ENCODE measurements at regions of chr22 and their contacts with region 1.

Region 1: GRCh38 chr22:39496131-39496838 is 5.8 kb upstream of the MIEF1 start:
- DNase-seq: peak; percentile 62
- ATAC-seq: peak; percentile 75
- H3K4me3 ChIP-seq: no peak overlapping the region
- H3K4me3 Mint-ChIP-seq: no peak overlapping the region
- H3K27ac ChIP-seq: no peak overlapping the region
- H3K27ac Mint-ChIP-seq: peak overlapping the region; percentile 70
- H3K4me1 ChIP-seq: peaks cover 4 to 7% of the 10 kb centered on the region in 2 donors
- H3K4me1 Mint-ChIP-seq: peaks cover 16% of the 10 kb centered on the region
- H3K27me3 ChIP-seq: no peaks in the 10 kb centered on the region
- H3K27me3 Mint-ChIP-seq: no peaks in the 10 kb centered on the region
- CTCF ChIP-seq: peak; percentile 73

Region 2: DNA sequence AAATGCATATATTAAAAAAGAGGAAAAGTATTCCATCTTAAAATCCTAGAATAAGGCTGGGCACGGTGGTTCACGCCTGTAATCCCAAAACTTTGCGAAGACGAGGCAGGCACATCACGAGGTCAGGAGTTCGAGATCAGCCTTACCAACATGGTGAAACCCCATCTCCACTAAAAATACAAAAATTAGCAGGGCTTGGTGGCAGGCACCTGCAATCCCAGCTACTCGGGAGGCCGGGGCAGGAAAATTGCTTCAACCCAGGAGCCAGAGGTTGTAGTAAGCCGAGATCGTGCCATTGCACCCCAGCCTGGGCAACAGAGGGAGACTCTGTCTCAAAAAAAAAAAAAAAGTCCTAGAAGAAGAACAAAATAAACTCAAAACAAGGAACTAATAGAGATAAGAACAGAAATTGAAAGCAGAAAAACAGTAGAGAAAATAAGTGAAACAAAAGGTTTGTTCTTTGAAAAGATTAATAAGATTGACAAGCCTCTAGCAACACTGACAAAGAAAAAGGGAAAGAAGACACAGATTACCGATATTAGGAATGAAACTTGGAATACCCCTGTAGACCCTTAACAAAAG is 298.8 kb before region 1 on chr22:
- CTCF ChIA-PET with region 1: no interaction called
- POLR2A ChIA-PET with region 1: no interaction called
- intact Hi-C with region 1: no loop called
- DNase-seq: no peak
- ATAC-seq: no peak
- H3K4me3 ChIP-seq: no peak overlapping the region
- H3K4me3 Mint-ChIP-seq: peak overlapping the region; percentile 31
- H3K27ac ChIP-seq: no peak overlapping the region
- H3K27ac Mint-ChIP-seq: peak overlapping the region; percentile 64
- H3K4me1 ChIP-seq: peaks cover 0 to 7% of the 10 kb centered on the region in 2 donors
- H3K4me1 Mint-ChIP-seq: peaks cover 6% of the 10 kb centered on the region
- H3K27me3 ChIP-seq: no peaks in the 10 kb centered on the region
- H3K27me3 Mint-ChIP-seq: peaks cover 7% of the 10 kb centered on the region
- CTCF ChIP-seq: no peak

Region 3: GRCh38 chr22:39462443-39463221 is 33.7 kb before region 1 on chr22:
- CTCF ChIA-PET with region 1: interaction called, 10 read pairs
- POLR2A ChIA-PET with region 1: no interaction called
- intact Hi-C with region 1: no loop called
- DNase-seq: peak; percentile 67
- ATAC-seq: peak; percentile 19
- H3K4me3 ChIP-seq: no peak overlapping the region
- H3K4me3 Mint-ChIP-seq: peak overlapping the region; percentile 50
- H3K27ac ChIP-seq: peak overlapping the region; percentile 75 to 83
- H3K27ac Mint-ChIP-seq: peak overlapping the region; percentile 62
- H3K4me1 ChIP-seq: peaks cover 60 to 75% of the 10 kb centered on the region in 2 donors
- H3K4me1 Mint-ChIP-seq: peaks cover 77% of the 10 kb centered on the region
- H3K27me3 ChIP-seq: peaks cover 0 to 10% (median 4%) of the 10 kb centered on the region in 4 experiments
- H3K27me3 Mint-ChIP-seq: peaks cover 6% of the 10 kb centered on the region
- CTCF ChIP-seq: no peak

Region 4: DNA sequence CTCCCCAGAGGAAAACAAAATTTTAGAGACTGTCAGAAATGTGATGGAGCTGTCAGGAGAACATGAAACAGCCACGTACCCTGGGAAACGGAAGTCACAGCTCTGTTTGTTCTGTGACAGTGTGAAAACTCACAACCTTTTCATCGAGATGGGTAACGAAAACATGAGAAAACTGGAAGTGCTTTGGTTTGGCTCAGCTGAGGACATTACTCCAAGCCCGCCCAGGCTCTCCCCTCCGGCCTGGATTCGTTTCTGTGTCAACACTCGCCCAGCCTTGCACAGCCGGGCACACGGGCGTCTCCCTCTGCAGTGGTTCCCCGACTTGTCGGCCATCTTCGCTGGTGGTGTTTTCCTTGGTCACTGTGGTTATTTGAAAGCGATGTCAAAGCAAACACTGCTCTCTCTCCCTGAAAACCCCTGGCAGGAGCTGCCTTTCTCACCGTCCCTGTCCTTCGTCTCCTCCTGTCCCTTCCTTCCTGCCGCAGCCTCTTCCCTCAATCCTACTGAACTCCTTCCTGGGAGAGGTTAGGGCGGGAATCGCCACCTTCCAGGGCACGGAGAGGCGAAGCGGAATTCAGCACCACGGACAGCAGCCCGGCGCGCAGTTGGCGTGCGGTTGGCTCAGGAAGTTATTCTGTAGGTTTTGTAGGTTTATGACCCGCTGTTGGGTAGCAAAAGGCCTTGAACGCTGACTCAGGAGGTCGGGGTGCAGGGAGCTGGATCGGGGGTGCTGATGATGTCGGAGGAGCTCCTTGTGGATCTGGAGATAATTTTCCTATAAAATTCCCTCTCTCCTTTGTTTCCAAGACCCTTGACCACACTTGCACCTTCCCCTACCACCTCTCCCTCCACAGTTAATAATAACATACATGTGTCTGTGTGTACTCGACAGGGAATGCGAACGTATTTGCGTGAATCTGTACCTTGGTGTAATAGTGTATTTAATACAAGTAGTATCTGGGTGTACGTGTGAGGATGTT is 49.4 kb after region 1 on chr22:
- CTCF ChIA-PET with region 1: no interaction called
- POLR2A ChIA-PET with region 1: no interaction called
- intact Hi-C with region 1: no loop called
- DNase-seq: peak; percentile 70
- ATAC-seq: peak; percentile 36
- H3K4me3 ChIP-seq: no peak overlapping the region
- H3K4me3 Mint-ChIP-seq: no peak overlapping the region
- H3K27ac ChIP-seq: no peak overlapping the region
- H3K27ac Mint-ChIP-seq: peak overlapping the region; percentile 61
- H3K4me1 ChIP-seq: peaks cover 0 to 8% of the 10 kb centered on the region in 2 donors
- H3K4me1 Mint-ChIP-seq: peaks cover 4% of the 10 kb centered on the region
- H3K27me3 ChIP-seq: peaks cover 0 to 47% (median 20%) of the 10 kb centered on the region in 4 experiments
- H3K27me3 Mint-ChIP-seq: peaks cover 54% of the 10 kb centered on the region
- CTCF ChIP-seq: no peak

Region 5: DNA sequence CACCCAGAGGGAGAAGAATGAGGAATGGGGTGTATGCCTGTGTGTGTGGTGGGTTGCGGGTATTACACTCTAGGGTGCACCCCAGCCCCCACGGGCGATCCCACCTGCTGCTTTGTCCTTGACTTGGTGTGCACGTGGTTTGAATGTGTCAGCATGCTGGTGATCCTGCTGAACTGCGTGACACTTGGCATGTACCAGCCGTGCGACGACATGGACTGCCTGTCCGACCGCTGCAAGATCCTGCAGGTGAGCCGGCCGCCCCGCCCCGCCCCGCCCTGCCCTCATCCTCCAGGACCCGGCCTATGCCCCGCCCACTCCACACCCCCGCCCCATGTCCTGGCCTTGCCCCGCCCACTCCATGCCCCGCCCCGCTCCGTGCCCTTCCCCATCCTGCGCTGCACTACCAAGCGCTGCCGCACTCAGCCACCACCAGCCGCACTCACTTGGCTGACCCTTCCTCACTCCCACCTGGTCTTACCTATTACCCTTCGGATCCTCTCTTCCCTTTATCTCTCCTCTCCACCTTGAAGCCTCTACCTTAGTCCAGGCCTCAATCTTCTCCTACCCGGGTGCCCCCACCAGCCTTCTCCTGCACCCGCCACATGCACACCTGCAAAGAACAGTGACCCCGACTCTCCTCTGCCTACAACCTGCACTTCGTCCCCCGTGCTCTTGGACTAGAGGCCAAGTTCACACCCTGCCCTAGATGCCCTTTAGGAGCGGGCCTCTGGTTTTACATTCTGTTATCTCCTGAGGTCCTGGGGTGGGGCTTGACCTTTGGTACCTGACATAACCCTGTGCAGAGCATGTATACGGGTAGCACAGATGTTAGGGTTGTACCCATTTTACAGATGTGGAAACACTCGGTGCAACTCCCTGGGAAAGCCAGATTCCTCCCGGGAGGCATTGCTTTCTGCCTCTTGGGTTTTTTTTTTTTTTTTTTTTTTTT is 102.0 kb after region 1 on chr22:
- CTCF ChIA-PET with region 1: no interaction called
- POLR2A ChIA-PET with region 1: no interaction called
- intact Hi-C with region 1: no loop called
- DNase-seq: peak; percentile 71
- ATAC-seq: peak; percentile 58
- H3K4me3 ChIP-seq: no peak overlapping the region
- H3K4me3 Mint-ChIP-seq: peak overlapping the region; percentile 57
- H3K27ac ChIP-seq: no peak overlapping the region
- H3K27ac Mint-ChIP-seq: peak overlapping the region; percentile 65
- H3K4me1 ChIP-seq: peaks cover 17 to 26% of the 10 kb centered on the region in 2 donors
- H3K4me1 Mint-ChIP-seq: peaks cover 33% of the 10 kb centered on the region
- H3K27me3 ChIP-seq: peaks cover 0 to 48% (median 15%) of the 10 kb centered on the region in 4 experiments
- H3K27me3 Mint-ChIP-seq: peaks cover 34% of the 10 kb centered on the region
- CTCF ChIP-seq: no peak

Measured in B cell (primary cell).